Activated CD8-positive, alpha-beta T cell treated with anti-CD3 and anti-CD28 coated beads for 36 hours (primary cell): ENCODE measurements at regions of chr4 and their contacts with region 1.

Region 1: DNA sequence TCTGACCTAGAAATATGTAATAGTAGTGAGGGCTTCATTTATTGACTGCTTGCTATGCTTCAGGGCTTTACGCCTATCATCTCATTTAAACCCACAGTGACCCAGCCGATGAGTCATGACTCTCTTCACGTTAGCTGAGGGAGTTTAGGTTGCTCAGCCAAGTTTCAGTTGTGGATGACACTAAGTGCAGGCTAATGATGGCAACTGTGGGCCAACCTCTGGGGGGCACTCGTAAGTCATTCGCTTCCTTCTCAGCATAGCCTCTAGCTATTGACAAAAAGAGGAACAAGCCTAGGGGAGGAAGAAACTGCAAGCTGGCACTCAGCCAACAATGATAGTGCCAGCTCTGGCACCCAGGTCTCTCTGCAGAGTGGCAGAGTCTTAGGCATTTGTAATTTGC is 325.0 kb downstream of the ARHGAP10 start:
- DNase-seq: peak; percentile 92
- ATAC-seq: peak; percentile 86
- H3K4me3 Mint-ChIP-seq: no peak overlapping the region
- H3K27ac Mint-ChIP-seq: peak overlapping the region; percentile 78
- H3K4me1 Mint-ChIP-seq: peaks cover 90% of the 10 kb centered on the region
- H3K27me3 Mint-ChIP-seq: no peaks in the 10 kb centered on the region
- CTCF ChIP-seq: peak; percentile 49

Region 2: GRCh38 chr4:148030193-148030873 is 26.5 kb before region 1 on chr4:
- CTCF ChIA-PET with region 1: no interaction called
- POLR2A ChIA-PET with region 1: no interaction called
- intact Hi-C with region 1: no loop called
- DNase-seq: no peak
- ATAC-seq: no peak
- H3K4me3 Mint-ChIP-seq: no peak overlapping the region
- H3K27ac Mint-ChIP-seq: no peak overlapping the region
- H3K4me1 Mint-ChIP-seq: no peaks in the 10 kb centered on the region
- H3K27me3 Mint-ChIP-seq: no peaks in the 10 kb centered on the region
- CTCF ChIP-seq: no peak

Region 3: DNA sequence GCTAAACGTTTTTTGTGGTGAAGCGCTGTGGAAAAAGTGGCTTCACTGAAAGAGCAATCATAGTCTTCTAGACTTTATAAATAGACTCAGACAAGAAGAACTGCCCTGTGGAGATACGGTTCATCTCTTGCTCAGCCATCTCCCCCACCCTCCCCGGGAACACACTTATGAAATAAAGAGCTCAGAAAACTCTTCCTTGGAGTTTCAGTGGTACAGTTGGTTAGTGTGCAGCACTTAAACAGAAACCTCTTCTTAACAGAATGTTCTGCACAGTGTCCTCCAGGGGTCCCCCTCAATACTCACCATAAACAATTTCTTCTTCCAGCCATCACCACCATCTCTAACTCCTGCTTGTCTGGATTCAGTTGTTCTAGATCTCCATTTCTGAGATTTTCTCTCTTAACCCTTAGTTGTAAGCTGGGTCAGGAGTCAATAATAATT is 11.9 kb before region 1 on chr4:
- CTCF ChIA-PET with region 1: interaction called, 12 read pairs
- POLR2A ChIA-PET with region 1: interaction called, 4 read pairs
- intact Hi-C with region 1: no loop called
- DNase-seq: peak; percentile 23
- ATAC-seq: peak; percentile 45
- H3K4me3 Mint-ChIP-seq: no peak overlapping the region
- H3K27ac Mint-ChIP-seq: no peak overlapping the region
- H3K4me1 Mint-ChIP-seq: peaks cover 15% of the 10 kb centered on the region
- H3K27me3 Mint-ChIP-seq: no peaks in the 10 kb centered on the region
- CTCF ChIP-seq: peak; percentile 17

Region 4: DNA sequence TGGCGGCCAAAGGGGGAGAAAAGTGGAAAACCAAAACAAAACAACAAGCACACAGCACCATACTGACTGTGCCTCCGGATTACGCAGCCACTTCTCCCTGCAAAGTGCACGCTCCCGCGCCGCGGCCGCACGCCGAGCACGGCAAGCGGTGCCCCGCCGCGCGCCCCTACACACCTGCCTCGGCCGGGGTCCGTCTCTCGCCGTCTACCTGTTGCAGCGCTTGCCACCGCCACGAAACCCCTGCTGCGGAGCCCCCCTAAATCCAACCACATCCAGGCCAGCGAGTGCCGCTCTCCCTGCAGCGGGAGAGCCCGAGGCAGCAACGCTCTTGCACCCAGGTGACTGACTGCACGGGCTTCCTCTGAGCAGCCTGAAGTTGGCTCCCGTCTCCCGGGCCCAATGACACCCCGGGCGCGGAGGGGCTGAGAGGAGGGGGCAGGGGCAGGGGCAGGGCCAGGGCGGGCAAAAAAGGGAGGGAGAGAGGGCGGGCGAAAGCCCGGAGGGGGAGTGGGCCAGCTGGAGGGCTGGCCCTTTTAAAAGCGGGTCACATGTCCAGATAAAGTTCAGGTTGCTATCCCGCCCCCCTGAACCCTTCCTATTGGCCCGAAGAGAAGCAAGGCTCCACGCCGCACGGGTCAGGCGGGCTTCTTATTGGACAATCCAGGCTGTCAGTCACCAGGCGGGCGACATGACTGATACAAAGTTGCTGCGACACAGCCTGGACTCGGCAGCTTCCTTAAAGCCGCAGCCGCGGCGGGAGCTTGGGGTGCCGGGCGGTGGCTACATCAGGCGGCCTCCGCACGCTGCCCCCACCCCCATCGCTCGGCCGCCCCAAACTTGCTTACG is 385.3 kb after region 1 on chr4 and contains the start of gene NR3C2:
- CTCF ChIA-PET with region 1: interaction called, 3 read pairs
- POLR2A ChIA-PET with region 1: interaction called, 4 read pairs
- intact Hi-C with region 1: loop called (anchors 5 kb)
- DNase-seq: peak; percentile 99
- ATAC-seq: peak; percentile 88
- H3K4me3 Mint-ChIP-seq: peak within 1 kb of the TSS; percentile 94
- H3K27ac Mint-ChIP-seq: peak within 1 kb of the TSS; percentile 94
- H3K4me1 Mint-ChIP-seq: peaks cover 48% of the 10 kb centered on the region
- H3K27me3 Mint-ChIP-seq: peaks cover 2% of the 10 kb centered on the region
- CTCF ChIP-seq: no peak
- total RNA-seq, gene NR3C2: 6.1 to 6.4 TPM